Activated CD4-positive, alpha-beta T cell treated with anti-CD3 and anti-CD28 coated beads, Interleukin-2, amount 10 ng/mL, durations not matched to agents 24 days and 14 days (primary cell): ENCODE measurements at regions of chr3 and their contacts with region 1.

Region 1: GRCh38 chr3:187974871-187975271 is 179.1 kb upstream of the LPP start:
- DNase-seq: peak; percentile 73
- H3K4me3 Mint-ChIP-seq: peak overlapping the region; percentile 73
- H3K27ac Mint-ChIP-seq: peak overlapping the region; percentile 94
- H3K4me1 Mint-ChIP-seq: peaks cover 63% of the 10 kb centered on the region
- H3K27me3 Mint-ChIP-seq: no peaks in the 10 kb centered on the region

Region 2: GRCh38 chr3:187870360-187871203 is 104.3 kb before region 1 on chr3:
- intact Hi-C with region 1: loop called (anchors 5 kb)
- DNase-seq: no peak
- H3K4me3 Mint-ChIP-seq: no peak overlapping the region
- H3K27ac Mint-ChIP-seq: peak overlapping the region; percentile 90
- H3K4me1 Mint-ChIP-seq: peaks cover 24% of the 10 kb centered on the region
- H3K27me3 Mint-ChIP-seq: no peaks in the 10 kb centered on the region

Region 3: DNA sequence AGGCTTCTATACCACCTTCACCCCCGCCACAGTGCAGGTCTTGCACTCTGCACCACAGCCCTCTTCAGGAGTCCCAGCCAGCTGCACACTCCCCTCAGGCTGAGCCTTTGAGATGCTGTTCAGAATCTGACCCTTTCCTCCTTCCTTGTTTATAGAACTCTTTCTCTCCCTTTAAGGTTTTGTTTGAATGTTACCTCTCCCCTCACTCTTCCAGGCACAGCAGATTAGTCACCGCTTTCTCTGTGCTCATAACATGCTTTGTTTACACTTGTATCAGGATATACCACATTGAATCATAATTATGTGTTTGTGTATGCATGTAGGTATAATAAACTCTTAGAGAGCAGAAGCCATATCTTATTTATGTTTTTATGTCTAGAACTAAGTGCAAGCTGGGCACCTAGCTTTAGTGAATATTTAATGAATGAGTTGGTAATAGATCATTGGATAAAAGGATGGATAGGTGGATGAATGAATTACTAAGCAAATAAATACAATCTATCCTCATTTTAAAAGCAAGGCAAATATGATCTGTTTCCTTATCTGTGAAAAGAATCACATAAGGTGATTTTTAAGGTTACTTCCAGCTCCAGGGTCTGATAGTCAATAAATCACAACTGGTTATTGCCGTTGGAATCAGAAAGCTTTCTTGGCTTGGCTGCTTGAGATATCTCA is 61.1 kb before region 1 on chr3:
- intact Hi-C with region 1: no loop called
- DNase-seq: peak; percentile 58
- H3K4me3 Mint-ChIP-seq: no peak overlapping the region
- H3K27ac Mint-ChIP-seq: peak overlapping the region; percentile 35
- H3K4me1 Mint-ChIP-seq: peaks cover 53% of the 10 kb centered on the region
- H3K27me3 Mint-ChIP-seq: no peaks in the 10 kb centered on the region

Region 4: GRCh38 chr3:187986514-187986934 is 11.7 kb after region 1 on chr3:
- intact Hi-C with region 1: loop called (anchors 1 kb)
- DNase-seq: peak; percentile 77
- H3K4me3 Mint-ChIP-seq: peak overlapping the region; percentile 56
- H3K27ac Mint-ChIP-seq: peak overlapping the region; percentile 84
- H3K4me1 Mint-ChIP-seq: peaks cover 57% of the 10 kb centered on the region
- H3K27me3 Mint-ChIP-seq: no peaks in the 10 kb centered on the region

Region 5: GRCh38 chr3:188154014-188154808 is 179.3 kb after region 1 on chr3 and contains the start of gene LPP:
- intact Hi-C with region 1: loop called (anchors 1 kb)
- DNase-seq: peak; percentile 97
- H3K4me3 Mint-ChIP-seq: peak within 1 kb of the TSS; percentile 86
- H3K27ac Mint-ChIP-seq: peak within 1 kb of the TSS; percentile 90
- H3K4me1 Mint-ChIP-seq: peaks cover 58% of the 10 kb centered on the region
- H3K27me3 Mint-ChIP-seq: no peaks in the 10 kb centered on the region
- total RNA-seq, gene LPP: 39.5 and 41.4 TPM in 2 replicates

Region 6: GRCh38 chr3:188294823-188295487 is 320.1 kb after region 1 on chr3:
- intact Hi-C with region 1: loop called (anchors 5 kb)
- DNase-seq: no peak
- H3K4me3 Mint-ChIP-seq: no peak overlapping the region
- H3K27ac Mint-ChIP-seq: no peak overlapping the region
- H3K4me1 Mint-ChIP-seq: peaks cover 71% of the 10 kb centered on the region
- H3K27me3 Mint-ChIP-seq: no peaks in the 10 kb centered on the region

Region 7: DNA sequence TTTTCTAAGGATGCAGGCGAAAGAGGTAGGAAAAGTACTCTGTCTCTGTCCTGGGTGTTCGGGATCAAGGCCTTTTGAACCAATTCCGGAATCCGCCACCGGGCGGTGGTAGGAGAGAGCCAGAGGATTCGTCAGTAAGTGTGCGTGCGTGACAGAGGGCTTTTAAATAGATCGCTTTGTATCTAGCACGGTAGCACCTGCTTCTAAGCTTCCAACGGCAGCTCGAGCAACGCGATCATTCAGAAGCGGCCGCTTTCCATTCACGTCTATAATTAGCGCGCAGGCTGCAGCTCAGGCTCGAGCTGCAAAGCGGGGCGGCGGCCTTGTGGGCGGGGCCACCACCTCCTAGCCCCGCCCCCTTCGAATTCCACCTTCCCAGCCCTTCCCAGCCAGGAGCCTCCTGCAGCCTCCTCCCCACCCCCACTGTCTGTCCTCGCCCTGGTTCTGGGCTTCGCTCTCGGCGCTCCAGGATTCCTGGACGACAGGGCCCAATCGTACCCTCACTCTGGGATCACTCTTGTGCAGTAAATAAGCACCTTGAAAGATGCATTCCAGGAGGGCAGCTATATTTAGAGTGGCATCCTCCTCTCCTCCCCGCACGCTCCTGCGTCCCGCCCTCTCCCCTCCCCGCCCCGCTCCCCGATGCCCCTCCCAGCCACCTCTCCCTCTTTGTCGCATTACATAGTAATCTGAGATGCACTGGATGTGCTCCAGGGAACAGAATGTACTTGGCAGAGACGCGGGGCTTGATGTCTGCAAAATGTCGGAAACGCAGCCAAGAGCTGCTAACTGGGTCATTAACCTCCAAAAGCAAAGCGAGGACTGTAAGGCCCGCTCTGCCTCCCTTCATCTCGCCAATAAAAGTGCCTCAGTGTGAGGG is 972.8 kb after region 1 on chr3:
- intact Hi-C with region 1: loop called (anchors 2 kb)
- DNase-seq: peak; percentile 63
- H3K4me3 Mint-ChIP-seq: peak overlapping the region; percentile 36
- H3K27ac Mint-ChIP-seq: no peak overlapping the region
- H3K4me1 Mint-ChIP-seq: peaks cover 28% of the 10 kb centered on the region
- H3K27me3 Mint-ChIP-seq: peaks cover 18% of the 10 kb centered on the region